CD8-positive, alpha-beta T cell (primary cell): ENCODE measurements at regions of chr20 and their contacts with region 1.

Region 1: DNA sequence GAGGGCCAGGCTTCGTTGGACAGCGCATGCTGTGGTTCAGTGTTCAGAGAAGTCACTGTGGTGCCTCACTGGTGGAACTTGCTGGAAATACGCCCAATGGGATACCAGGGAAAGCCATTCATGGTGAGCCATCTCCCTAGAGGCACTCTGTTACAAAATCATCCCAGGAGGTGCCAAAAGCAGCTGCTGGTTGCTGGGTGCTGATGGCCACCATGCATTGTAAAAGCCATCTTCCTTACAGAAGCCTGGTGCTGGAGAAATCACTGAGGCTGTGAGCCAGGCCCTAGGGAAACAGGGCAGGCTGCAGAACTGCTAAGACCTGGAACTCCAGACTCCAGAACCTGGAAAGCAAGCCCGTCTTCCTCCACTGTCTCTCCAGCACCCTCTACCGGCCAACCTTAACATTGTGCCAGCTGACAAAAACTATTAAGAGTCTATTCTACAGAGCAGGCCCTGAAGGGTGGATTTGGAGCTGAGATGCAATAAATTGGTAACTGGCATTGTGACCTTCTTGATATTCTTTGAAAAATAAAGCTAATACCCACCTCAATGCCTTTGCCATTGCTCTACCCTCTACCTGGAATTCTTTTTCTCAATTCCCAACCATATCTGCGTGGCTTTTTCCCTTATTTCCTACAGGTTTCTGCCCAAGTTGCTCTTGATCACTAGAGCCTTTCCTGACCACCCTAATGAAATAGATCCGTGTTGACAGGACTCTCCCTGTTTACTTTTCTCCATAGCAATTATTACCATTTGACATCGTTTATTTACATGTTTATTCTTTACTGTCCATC is 18.5 kb downstream of the SNRPB start:
- DNase-seq: peak; percentile 17 to 70 (median 65)
- ATAC-seq: peak; percentile 69
- H3K4me3 ChIP-seq: no peak overlapping the region
- H3K4me3 Mint-ChIP-seq: no peak overlapping the region
- H3K27ac ChIP-seq: no peak overlapping the region
- H3K27ac Mint-ChIP-seq: no peak overlapping the region
- H3K4me1 ChIP-seq: no peaks in the 10 kb centered on the region
- H3K4me1 Mint-ChIP-seq: peaks cover 7% of the 10 kb centered on the region
- H3K27me3 ChIP-seq: no peaks in the 10 kb centered on the region
- H3K27me3 Mint-ChIP-seq: no peaks in the 10 kb centered on the region
- CTCF ChIP-seq: peak; percentile 62

Region 2: DNA sequence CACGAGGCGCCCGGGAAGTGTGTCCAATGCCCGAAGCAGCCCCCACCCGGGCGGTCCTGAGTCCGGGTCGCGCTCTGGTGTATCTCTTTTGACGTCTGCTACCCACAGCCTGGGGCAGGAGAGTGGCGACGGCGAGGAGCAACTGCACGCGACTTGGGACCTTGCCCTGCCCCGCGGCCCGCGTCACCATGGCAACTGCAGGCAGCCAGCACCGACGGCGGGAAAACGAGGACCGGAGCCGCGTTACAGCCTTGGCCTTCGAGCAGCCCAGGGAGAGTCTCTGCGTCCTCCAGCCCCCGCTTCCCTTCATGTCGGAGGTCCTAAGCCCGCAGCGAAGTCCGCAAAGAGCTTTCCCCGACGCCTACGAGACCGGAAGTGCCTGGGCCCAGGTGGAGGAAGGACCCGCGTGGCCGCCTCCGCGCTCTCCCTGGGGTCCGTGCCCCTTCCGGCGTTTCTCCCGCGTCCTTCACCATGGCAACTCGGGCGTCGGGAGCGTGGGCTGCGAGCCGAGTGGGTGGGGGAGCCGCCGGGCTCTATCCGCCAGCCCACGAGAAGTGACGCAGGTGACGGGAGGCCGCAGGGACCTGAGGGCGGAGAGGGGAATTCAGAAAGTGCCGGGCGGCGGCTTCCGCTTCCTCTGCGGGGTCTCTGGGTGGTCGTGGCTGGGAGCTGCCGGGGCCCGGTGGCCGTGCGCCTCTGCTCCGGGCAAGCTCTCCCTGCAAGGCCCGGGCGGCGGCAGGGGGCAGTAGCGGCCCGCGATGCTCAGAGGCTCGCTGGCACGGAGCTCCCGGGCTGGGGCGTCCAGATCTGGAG is 245.0 kb before region 1 on chr20:
- CTCF ChIA-PET with region 1: interaction called, 4 read pairs
- POLR2A ChIA-PET with region 1: no interaction called
- intact Hi-C with region 1: loop called (anchors 5 kb)
- DNase-seq: peak; percentile 20 to 76 (median 44)
- ATAC-seq: peak; percentile 55
- H3K4me3 ChIP-seq: peak overlapping the region; percentile 61 to 71
- H3K4me3 Mint-ChIP-seq: peak overlapping the region; percentile 79
- H3K27ac ChIP-seq: no peak overlapping the region
- H3K27ac Mint-ChIP-seq: no peak overlapping the region
- H3K4me1 ChIP-seq: peaks cover 6% of the 10 kb centered on the region
- H3K4me1 Mint-ChIP-seq: peaks cover 8% of the 10 kb centered on the region
- H3K27me3 ChIP-seq: peaks cover 0 to 4% of the 10 kb centered on the region in 2 experiments
- H3K27me3 Mint-ChIP-seq: peaks cover 22% of the 10 kb centered on the region
- CTCF ChIP-seq: peak; percentile 35